Activated CD4-positive, alpha-beta memory T cell treated with anti-CD3 and anti-CD28 coated beads, Interleukin-2, amount 10 ng/mL, durations not matched to agents 7 days and 5 days (primary cell): ENCODE measurements at regions of chr1 and their contacts with region 1.

Region 1: DNA sequence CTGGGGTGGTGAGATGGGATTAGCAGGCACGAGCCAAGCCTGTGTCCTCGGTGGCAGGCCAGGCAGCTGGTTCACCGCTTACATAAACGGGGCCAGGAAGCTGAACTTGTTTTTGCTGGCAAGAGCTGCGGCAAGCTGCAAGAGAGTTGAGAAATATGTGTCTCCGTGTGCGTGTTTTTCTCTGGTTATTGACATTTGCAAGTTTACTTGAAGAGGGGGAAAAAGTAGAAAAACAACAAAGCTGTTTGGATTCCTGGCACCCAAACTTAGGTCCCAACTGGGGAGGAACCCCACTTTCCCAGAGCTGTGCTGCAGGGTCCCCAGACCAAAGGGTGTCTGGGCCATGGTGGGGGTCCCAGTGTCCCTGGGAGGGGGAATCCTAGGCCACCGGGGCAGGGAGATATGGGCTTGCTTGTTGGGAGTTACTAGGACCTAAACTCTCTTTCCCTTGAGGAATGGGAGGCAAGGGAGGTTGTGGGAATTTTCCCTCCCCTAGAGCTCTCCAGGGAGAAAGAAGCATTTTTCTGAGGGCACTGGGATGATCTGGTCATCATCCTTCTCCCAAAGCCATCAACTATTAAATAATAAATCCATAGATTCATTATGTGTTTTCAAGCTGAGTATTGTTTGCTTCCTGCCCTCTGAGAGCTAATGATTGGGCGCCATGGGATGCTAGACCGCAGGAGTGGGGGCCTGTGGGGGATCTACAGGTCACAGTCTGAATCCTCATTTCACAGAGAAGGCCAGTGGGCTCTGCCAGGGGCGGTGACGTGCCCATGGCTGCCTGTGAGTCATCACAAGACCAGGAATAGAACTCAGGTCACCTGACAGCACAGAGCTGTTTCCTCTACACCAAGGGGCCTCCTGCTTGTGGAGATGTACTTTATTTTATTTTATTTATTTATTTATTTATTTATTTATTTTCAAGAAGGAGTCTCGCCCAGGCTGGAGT is 14.8 kb downstream of the IL6R start:
- DNase-seq: peak; percentile 67
- H3K4me3 Mint-ChIP-seq: peak overlapping the region; percentile 40
- H3K27ac Mint-ChIP-seq: peak overlapping the region; percentile 77
- H3K4me1 Mint-ChIP-seq: peaks cover 53% of the 10 kb centered on the region
- H3K27me3 Mint-ChIP-seq: no peaks in the 10 kb centered on the region

Region 2: DNA sequence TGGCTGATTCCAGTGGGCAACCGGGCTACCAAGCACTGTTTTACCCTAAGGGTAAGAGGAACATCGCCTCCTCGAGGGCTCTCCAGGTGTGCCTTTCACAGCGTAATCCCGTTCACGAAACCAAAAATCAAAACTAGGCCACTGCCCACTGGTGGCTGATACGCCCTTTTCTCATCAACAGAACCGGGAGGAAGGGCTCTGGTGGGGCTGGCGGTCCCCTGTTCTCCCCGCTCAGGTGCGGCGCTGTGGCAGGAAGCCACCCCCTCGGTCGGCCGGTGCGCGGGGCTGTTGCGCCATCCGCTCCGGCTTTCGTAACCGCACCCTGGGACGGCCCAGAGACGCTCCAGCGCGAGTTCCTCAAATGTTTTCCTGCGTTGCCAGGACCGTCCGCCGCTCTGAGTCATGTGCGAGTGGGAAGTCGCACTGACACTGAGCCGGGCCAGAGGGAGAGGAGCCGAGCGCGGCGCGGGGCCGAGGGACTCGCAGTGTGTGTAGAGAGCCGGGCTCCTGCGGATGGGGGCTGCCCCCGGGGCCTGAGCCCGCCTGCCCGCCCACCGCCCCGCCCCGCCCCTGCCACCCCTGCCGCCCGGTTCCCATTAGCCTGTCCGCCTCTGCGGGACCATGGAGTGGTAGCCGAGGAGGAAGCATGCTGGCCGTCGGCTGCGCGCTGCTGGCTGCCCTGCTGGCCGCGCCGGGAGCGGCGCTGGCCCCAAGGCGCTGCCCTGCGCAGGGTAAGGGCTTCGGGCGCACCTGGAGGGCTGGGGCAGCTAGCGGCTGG is 14.7 kb before region 1 on chr1 and contains the start of gene IL6R:
- CTCF ChIA-PET with region 1: interaction called, 10 read pairs
- POLR2A ChIA-PET with region 1: interaction called, 36 read pairs
- DNase-seq: peak; percentile 74
- H3K4me3 Mint-ChIP-seq: peak within 1 kb of the TSS; percentile 77
- H3K27ac Mint-ChIP-seq: peak within 1 kb of the TSS; percentile 88
- H3K4me1 Mint-ChIP-seq: peaks cover 83% of the 10 kb centered on the region
- H3K27me3 Mint-ChIP-seq: peaks cover 19% of the 10 kb centered on the region
- total RNA-seq, gene IL6R: 15.7 to 16.0 TPM

Region 3: GRCh38 chr1:154431586-154432373 is 11.9 kb after region 1 on chr1:
- CTCF ChIA-PET with region 1: interaction called, 7 read pairs
- POLR2A ChIA-PET with region 1: interaction called, 12 read pairs
- DNase-seq: peak; percentile 57
- H3K4me3 Mint-ChIP-seq: peak overlapping the region; percentile 1
- H3K27ac Mint-ChIP-seq: peak overlapping the region; percentile 64
- H3K4me1 Mint-ChIP-seq: peaks cover 35% of the 10 kb centered on the region
- H3K27me3 Mint-ChIP-seq: no peaks in the 10 kb centered on the region

Region 4: DNA sequence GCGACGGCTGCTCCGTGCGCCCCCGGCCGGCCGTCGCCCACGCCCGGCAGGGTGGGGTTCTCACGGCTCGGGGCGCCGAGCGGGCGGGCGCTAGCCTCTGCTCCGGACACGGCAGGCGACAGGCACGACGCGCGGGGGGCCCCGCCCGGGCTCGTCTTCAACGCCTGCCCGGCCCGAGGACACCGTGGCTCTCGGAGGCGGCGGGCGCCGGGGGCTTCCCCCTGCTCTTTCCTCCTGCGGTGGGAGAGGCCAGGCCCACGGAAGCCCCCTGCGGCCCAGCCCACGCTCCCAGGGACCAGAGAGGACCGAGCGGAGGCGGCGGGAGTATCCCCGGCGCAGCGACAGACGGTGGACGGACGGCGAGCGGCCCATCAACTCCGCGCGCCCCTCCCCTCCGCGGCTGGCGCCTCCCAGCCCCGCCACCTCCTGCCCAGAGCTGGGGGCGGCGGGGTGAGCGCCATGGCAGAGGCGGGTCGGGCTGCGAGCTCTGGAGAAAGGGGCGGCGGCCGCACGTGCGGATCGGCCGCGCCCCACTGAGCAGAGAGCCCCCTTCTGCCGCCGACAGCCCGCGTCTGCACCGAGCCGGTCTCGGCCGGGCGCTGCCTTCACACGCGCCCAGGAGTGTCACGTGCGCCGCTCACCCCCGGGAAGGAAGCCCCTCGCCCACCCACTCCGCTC is 82.3 kb after region 1 on chr1 and contains the starts of genes SHE and TDRD10:
- CTCF ChIA-PET with region 1: no interaction called
- POLR2A ChIA-PET with region 1: no interaction called
- DNase-seq: no peak
- H3K4me3 Mint-ChIP-seq: peak within 1 kb of the TSS; percentile 18
- H3K27ac Mint-ChIP-seq: no peak within 1 kb of the TSS
- H3K4me1 Mint-ChIP-seq: peaks cover 14% of the 10 kb centered on the region
- H3K27me3 Mint-ChIP-seq: peaks cover 59% of the 10 kb centered on the region
- total RNA-seq, gene SHE: not detected
- total RNA-seq, gene TDRD10: not detected